HEK293 (cell line): ENCODE measurements at regions of chr9 and their contacts with region 1.

Region 1: DNA sequence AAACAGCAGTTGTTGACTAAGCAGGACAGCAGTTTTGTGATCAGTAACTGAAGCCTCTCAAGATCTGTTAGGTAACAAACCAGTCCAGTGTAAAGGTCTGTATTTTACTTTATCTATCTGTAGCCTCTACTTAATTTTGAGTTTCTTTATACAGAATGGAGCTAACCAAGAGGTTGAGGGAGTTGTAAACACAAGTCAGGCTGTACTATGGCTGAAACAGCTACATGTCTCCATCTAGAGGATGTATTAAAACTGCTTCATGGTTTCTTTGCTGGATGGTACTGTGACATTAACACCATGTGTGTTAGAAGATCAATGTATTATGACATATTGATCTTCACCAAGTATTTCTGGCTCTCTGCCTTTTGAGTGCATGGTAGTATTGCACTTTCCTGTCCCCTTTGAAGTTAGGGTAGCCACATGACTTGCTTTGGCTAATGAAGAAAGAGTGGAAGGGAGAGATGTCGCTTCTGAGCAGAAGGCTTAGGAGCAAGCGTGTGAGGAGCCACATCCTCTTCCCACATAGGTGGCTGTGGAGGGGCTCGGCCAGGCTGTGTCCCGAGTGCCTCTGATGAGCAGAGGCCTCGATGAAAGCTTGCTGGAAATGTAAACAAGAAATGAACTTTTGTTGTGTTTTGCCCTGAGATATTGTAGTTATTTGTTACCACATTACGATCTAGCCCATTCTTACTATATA is 105.6 kb upstream of the PCA3 start:
- H3K4me3 ChIP-seq: no peak overlapping the region
- H3K27ac ChIP-seq: no peak overlapping the region
- H3K4me1 ChIP-seq: peaks cover 9% of the 10 kb centered on the region; the same call in 1 of the 2 replicates
- CTCF ChIP-seq: no peak

Region 2: GRCh38 chr9:76441551-76442322 is 216.9 kb before region 1 on chr9:
- CTCF ChIA-PET with region 1: interaction called, 35 read pairs
- POLR2A ChIA-PET with region 1: no interaction called
- H3K4me3 ChIP-seq: no peak overlapping the region
- H3K27ac ChIP-seq: no peak overlapping the region
- H3K4me1 ChIP-seq: no peaks in the 10 kb centered on the region
- CTCF ChIP-seq: no peak

Region 3: GRCh38 chr9:76451234-76451633 is 207.4 kb before region 1 on chr9:
- CTCF ChIA-PET with region 1: interaction called, 35 read pairs
- POLR2A ChIA-PET with region 1: no interaction called
- H3K4me3 ChIP-seq: no peak overlapping the region
- H3K27ac ChIP-seq: no peak overlapping the region
- H3K4me1 ChIP-seq: 0 out of 2 replicates have a peak, but pooled peaks cover 3% of the 10 kb centered on the region
- CTCF ChIP-seq: no peak

Region 4: DNA sequence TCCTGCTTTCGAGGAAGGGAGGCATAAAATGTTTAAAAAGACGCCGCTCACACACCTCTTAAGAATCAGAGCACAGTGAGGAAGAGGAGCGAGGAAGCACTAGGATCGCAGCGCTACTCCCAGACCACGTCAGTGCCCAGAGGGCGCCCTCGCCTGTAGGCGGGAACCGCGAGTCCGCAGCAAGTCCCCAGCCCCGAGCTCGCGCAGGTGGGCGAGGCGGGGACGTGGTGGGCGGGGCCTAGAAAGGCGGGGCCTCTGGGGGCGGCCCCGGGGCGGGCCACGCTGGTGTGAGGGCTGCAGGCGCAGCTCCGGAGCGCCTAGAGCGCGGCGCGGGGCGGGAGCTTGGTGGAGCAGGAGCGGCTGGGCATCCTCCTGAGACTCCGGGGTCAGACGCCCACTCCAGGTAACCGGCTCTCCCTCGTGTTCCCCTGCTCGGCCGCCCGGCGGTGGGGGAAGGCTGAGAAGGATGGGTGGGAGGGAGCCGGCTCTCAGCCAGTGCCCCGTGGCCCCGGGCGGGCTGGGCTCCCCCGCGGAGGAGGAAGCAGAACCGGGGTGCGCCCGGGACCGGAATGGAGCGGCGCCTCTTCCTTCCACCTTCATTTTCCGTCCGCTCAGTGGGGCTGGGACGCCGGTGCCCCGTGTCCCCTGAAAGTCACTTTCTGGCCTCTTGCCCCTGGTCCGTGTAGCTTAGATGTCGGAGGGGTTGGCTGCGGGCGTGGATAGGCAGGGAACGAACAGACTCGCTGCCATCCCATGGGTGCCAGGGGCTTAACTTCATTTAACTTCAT is 199.6 kb before region 1 on chr9 and contains the start of gene GCNT1:
- CTCF ChIA-PET with region 1: interaction called, 20 read pairs
- POLR2A ChIA-PET with region 1: interaction called, 5 read pairs
- H3K4me3 ChIP-seq: peak within 1 kb of the TSS; percentile 75
- H3K27ac ChIP-seq: peak within 1 kb of the TSS; percentile 53
- H3K4me1 ChIP-seq: peaks cover 11% of the 10 kb centered on the region
- CTCF ChIP-seq: peak; percentile 57; the same call in 1 of the 2 replicates

Region 5: DNA sequence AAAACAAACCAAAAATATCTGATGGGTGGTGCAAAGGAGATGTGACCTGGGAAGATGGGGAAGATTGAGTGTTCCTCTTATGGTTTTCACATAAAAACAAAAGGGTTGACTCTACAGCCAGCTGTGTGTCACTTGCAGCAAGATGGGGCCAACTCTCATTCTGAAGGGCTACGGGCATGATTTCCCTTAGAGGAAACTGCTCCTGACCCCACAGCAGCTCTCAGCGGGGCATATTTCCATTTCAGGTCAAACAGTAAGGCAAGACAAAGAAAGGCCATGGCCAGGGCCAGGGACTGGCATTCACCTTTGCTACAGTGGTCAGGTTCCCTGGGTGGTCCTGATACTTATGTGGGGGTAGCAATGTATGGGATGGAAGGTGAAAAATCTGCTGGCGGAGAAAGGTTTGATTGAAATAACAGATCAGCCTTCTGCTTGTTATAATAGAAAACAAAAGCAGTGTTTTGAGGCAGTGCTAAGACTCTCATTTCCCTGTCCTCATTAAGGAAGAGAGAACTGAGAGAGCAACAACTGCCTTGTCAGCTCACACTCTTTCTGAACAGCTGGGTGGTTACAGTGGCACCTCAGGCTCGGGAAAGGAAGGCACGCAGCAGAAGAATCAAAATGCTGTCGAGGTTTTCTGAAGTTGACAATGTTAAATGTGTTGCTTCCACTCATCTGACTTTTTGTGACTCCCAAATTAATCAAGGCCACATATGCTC is 15.1 kb before region 1 on chr9:
- CTCF ChIA-PET with region 1: interaction called, 16 read pairs
- POLR2A ChIA-PET with region 1: interaction called, 3 read pairs
- H3K4me3 ChIP-seq: no peak overlapping the region
- H3K27ac ChIP-seq: no peak overlapping the region
- H3K4me1 ChIP-seq: no peaks in the 10 kb centered on the region
- CTCF ChIP-seq: no peak

Region 6: GRCh38 chr9:76677481-76678055 is 18.9 kb after region 1 on chr9:
- CTCF ChIA-PET with region 1: no interaction called
- POLR2A ChIA-PET with region 1: no interaction called
- H3K4me3 ChIP-seq: no peak overlapping the region
- H3K27ac ChIP-seq: no peak overlapping the region
- H3K4me1 ChIP-seq: no peaks in the 10 kb centered on the region; the same call in 1 of the 2 replicates
- CTCF ChIP-seq: no peak

Region 7: DNA sequence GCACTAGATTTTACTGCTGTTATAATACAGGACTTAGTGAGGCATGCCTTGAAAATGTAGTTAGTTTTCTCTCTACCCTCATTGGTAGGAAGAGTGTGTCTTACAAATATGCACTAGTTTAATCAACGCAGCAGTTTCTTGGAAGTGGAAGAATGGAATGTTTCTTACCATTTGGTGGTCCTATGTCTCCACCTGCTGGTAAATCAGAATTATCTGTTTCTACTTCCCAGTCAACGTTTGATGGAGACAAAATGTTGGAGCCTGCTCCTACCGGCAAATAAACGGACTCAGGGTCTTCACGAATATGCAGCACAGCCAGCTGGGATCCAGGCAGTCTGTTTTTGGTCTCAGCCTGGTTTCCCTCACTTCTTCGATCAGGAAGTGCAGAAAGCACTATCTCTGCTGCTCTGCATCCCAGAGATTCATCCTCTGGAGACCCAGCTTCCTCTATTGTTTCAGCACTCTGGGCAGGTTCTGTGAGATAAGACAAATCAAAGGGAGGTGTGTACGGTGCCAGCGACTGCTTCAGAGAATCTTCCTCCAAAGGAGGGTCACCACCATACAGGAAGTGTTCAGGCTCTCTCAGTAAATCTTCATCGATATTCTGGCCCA is 46.0 kb after region 1 on chr9:
- CTCF ChIA-PET with region 1: interaction called, 31 read pairs
- POLR2A ChIA-PET with region 1: no interaction called
- H3K4me3 ChIP-seq: no peak overlapping the region
- H3K27ac ChIP-seq: no peak overlapping the region
- H3K4me1 ChIP-seq: no peaks in the 10 kb centered on the region; the same call in 1 of the 2 replicates
- CTCF ChIP-seq: peak; percentile 47; the same call in 1 of the 2 replicates